ENCODE measurements at regions of chr17 and their contacts with region 1.

Region 1: DNA sequence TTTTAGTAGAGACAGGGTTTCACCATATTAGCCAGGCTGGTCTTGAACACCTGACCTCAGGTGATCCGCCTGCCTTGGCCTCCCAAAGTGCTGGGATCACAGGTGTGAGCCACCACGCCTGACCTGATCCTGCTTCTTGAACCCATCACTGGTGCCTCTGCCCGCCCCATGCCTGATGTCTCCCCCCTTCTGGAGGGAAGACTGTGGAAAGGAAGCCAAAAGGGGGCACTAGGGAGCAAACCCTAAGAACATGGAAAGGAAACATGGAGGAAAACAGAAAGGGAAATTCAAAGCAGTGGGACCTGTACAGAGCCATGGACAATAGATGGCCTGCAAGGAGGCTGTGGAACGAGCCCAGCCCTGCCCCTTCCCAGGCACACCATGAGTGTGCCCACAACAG is 31.1 kb upstream of the FASN start:
- DNase-seq: no peak
- ATAC-seq: no peak
- H3K4me3 ChIP-seq: no peak overlapping the region
- H3K4me3 Mint-ChIP-seq: no peak overlapping the region
- H3K27ac ChIP-seq: no peak overlapping the region
- H3K27ac Mint-ChIP-seq: peak overlapping the region; percentile 98
- H3K4me1 ChIP-seq: peaks cover 46% of the 10 kb centered on the region
- H3K4me1 Mint-ChIP-seq: peaks cover 47% of the 10 kb centered on the region
- H3K27me3 ChIP-seq: no peaks in the 10 kb centered on the region
- H3K27me3 Mint-ChIP-seq: no peaks in the 10 kb centered on the region
- CTCF ChIP-seq: no peak

Region 2: DNA sequence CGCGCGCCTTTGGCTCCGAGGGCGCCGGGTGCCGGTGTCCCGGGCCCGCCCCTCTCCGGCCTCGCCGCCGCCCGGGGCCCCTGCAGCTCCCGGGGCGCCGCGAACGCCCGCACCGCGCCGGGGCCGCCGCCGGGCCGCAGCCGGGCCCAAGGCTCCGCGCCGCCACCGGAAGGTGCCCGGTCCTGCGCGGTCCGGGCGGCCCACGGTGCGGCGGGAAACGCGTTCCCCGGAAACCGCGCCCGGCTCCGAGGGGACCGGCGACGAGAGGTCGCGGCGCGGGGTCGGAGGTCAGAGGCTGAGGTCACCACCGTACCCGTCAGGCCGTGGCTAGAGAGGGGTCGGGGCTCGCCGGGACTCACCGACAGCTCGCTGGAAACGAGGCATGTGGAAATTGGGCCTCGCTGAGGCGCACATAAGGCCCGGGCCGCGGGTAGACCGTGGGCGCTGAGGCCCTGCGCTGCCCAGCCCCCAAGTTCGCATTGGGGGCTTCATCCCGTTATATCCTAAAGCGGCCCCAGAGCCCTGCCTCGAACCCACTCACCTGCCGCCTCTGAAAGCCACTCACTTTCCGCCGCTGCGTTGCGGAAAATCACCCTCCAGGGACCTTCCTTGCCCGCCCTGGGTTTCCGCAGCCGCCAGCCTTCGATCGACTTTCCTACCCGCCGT is 63.3 kb before region 1 on chr17 and contains the start of gene DUS1L:
- CTCF ChIA-PET with region 1: interaction called, 4 read pairs
- POLR2A ChIA-PET with region 1: interaction called, 9 read pairs
- intact Hi-C with region 1: loop called in 1 of 2 experiments (anchors 1 kb)
- DNase-seq: peak; percentile 44 to 86 (median 68)
- ATAC-seq: peak; percentile 87
- H3K4me3 ChIP-seq: peak within 1 kb of the TSS; percentile 79 to 87
- H3K4me3 Mint-ChIP-seq: peak within 1 kb of the TSS; percentile 82
- H3K27ac ChIP-seq: peak within 1 kb of the TSS; percentile 70 to 91
- H3K27ac Mint-ChIP-seq: peak within 1 kb of the TSS; percentile 92
- H3K4me1 ChIP-seq: peaks cover 20% of the 10 kb centered on the region
- H3K4me1 Mint-ChIP-seq: peaks cover 14% of the 10 kb centered on the region
- H3K27me3 ChIP-seq: no peaks in the 10 kb centered on the region
- H3K27me3 Mint-ChIP-seq: no peaks in the 10 kb centered on the region
- CTCF ChIP-seq: no peak
- total RNA-seq, gene DUS1L: 159 to 174 TPM

Region 3: DNA sequence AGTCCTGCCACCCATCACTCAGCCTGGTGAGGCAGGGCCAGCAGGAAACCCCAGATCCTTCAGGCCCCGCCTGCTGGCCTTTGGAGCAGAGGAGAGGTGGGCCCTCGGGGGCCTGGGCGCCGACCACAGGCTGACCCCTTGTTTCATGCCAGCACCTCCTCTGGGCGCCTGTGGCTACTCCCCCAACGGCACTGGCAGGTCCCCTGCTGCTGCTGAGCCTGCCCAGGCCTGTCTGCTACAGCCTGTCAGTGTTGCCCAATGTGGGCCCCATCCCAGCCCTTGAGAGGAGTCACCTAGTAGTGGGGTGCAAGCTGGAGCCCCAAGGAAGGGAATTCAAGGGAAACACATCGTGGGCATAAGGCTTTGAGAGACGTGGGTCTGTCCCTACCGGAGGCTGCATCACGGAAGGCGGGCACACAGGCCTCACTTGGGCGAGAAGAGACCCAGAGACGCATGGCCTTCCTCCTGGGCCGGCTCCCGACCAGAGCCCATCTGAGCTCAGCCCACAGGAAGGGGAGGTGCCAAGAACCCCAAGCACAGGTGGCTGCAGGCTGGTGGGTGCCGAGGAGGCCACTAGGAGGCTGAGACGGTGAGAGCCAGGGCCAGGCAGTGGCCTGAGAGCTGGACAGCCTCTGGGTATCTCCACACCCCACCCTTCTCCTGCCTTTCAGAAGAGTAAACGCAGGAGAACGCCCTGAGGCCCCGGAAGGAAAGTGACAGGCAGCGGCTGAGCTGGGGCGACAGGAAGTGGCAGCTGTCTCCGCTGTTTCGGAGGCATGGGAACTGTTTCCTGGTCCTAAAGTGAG is 23.0 kb before region 1 on chr17:
- CTCF ChIA-PET with region 1: interaction called, 4 read pairs
- POLR2A ChIA-PET with region 1: interaction called, 25 read pairs
- intact Hi-C with region 1: loop called (anchors 1 to 2 kb)
- DNase-seq: peak in 8 of 9 experiments; percentile 38 to 80 (median 60)
- ATAC-seq: peak; percentile 65
- H3K4me3 ChIP-seq: peak overlapping the region; percentile 59 to 64
- H3K4me3 Mint-ChIP-seq: peak overlapping the region; percentile 87
- H3K27ac ChIP-seq: peak overlapping the region; percentile 65 to 89
- H3K27ac Mint-ChIP-seq: peak overlapping the region; percentile 96
- H3K4me1 ChIP-seq: peaks cover 22% of the 10 kb centered on the region
- H3K4me1 Mint-ChIP-seq: peaks cover 23% of the 10 kb centered on the region
- H3K27me3 ChIP-seq: no peaks in the 10 kb centered on the region
- H3K27me3 Mint-ChIP-seq: no peaks in the 10 kb centered on the region
- CTCF ChIP-seq: peak; percentile 28

Region 4: DNA sequence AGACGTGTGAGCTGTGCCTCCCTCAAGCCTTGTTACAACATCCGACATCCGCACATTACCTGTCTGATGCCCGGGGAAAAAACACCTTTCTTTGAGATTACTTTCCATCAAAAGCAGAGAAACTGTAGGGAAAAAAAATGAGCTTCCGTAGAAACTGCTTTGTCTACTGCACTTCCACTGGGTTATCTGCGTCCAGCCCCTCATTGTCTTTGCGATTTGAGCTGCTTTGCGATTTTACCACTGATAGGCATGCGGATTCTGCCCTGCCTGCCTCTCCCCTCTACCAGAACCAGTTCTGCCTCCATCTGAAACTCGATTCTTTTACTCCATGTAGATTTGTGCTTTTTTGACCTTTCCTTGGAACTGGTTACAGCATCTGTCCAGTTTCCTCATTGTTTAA is 12.6 kb after region 1 on chr17:
- CTCF ChIA-PET with region 1: interaction called, 5 read pairs
- POLR2A ChIA-PET with region 1: interaction called, 7 read pairs
- intact Hi-C with region 1: loop called in 1 of 2 experiments (anchors 2 kb)
- DNase-seq: no peak
- ATAC-seq: no peak
- H3K4me3 ChIP-seq: no peak overlapping the region
- H3K4me3 Mint-ChIP-seq: no peak overlapping the region
- H3K27ac ChIP-seq: no peak overlapping the region
- H3K27ac Mint-ChIP-seq: no peak overlapping the region
- H3K4me1 ChIP-seq: no peaks in the 10 kb centered on the region
- H3K4me1 Mint-ChIP-seq: no peaks in the 10 kb centered on the region
- H3K27me3 ChIP-seq: no peaks in the 10 kb centered on the region
- H3K27me3 Mint-ChIP-seq: no peaks in the 10 kb centered on the region
- CTCF ChIP-seq: no peak

Region 5: DNA sequence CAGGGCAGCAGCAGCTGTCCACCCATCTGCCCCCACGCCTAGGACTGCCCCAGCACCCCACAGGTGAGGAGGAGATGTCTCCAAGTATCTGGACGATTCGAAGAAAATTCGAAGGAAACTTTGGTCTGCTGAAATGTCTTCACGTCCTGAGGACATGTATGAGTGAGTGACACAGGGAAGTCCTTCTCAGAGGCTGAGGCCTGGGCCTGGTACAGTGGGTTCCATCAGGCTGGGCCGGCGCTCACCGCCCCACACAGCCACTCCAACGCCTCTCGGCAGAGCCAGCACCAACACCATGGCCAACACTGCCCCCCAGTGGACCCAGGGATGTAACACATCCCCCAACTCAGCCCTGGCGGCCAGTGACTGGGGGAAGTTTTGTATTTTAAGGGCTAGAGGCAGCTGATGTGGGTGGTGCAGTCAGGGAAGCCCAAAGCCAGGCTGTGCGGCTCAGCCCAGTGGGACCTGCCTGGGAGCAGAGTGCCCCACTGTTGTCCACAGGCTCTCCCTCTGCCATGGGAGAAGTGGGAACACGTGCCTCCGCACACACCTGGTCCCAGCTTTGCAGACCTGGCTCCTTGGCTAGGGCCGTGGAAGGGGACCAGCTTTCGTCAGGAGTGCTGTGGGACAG is 24.8 kb after region 1 on chr17:
- CTCF ChIA-PET with region 1: interaction called, 6 read pairs
- POLR2A ChIA-PET with region 1: interaction called, 3 read pairs
- intact Hi-C with region 1: loop called (anchors 1 to 2 kb)
- DNase-seq: peak; percentile 71 to 92 (median 84)
- ATAC-seq: peak; percentile 100
- H3K4me3 ChIP-seq: no peak overlapping the region
- H3K4me3 Mint-ChIP-seq: no peak overlapping the region
- H3K27ac ChIP-seq: no peak overlapping the region
- H3K27ac Mint-ChIP-seq: peak overlapping the region; percentile 57
- H3K4me1 ChIP-seq: peaks cover 7% of the 10 kb centered on the region
- H3K4me1 Mint-ChIP-seq: peaks cover 5% of the 10 kb centered on the region
- H3K27me3 ChIP-seq: no peaks in the 10 kb centered on the region
- H3K27me3 Mint-ChIP-seq: no peaks in the 10 kb centered on the region
- CTCF ChIP-seq: peak; percentile 98

Region 6: DNA sequence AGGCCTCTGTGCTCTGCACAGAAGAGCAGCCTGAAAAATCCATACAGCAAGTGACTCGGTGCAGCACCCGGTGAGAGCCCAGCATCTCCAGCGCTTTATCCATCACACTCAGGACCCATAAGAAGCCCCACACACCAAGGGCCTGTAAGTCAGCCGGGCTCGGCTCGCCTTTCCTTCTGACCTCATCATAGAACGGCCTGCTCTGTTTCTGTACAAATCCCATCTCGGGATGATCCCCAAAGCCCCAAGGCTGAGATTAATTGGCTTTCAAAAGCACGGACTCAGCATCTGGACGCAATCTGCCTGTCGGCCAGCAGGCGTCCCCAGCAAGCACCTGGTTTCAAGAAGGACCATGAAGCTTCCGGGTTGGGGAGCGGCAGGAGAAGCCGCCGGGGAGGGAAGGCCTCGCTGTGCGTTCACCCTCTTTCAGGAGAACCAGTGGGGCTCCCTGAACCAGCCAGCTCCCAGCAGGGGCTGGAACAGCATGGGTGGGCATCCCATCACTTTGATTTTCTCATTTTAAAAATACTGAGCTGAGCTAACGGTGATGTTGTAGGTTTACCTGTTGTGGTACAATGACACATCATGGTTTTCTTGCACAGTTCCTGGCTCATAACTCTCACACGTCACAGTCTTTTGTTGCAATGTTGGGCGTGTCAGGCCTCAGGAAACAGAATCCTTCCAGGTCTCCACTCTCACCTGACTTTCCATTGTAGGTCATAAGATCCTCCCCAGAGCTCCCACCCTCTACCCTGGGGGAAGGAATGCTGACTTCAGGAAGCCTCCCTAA is 76.8 kb after region 1 on chr17:
- CTCF ChIA-PET with region 1: no interaction called
- POLR2A ChIA-PET with region 1: interaction called, 6 read pairs
- intact Hi-C with region 1: loop called in 1 of 2 experiments (anchors 1 kb)
- DNase-seq: peak; percentile 61 to 91 (median 82)
- ATAC-seq: peak; percentile 83
- H3K4me3 ChIP-seq: no peak overlapping the region
- H3K4me3 Mint-ChIP-seq: peak overlapping the region; percentile 60
- H3K27ac ChIP-seq: peak overlapping the region; percentile 56 to 89
- H3K27ac Mint-ChIP-seq: peak overlapping the region; percentile 96
- H3K4me1 ChIP-seq: peaks cover 24% of the 10 kb centered on the region
- H3K4me1 Mint-ChIP-seq: peaks cover 40% of the 10 kb centered on the region
- H3K27me3 ChIP-seq: no peaks in the 10 kb centered on the region
- H3K27me3 Mint-ChIP-seq: no peaks in the 10 kb centered on the region
- CTCF ChIP-seq: peak; percentile 88

Measured in CD8-positive, alpha-beta T cell (primary cell).